B cell (primary cell): ENCODE measurements at regions of chr3 and their contacts with region 1.

Region 1: DNA sequence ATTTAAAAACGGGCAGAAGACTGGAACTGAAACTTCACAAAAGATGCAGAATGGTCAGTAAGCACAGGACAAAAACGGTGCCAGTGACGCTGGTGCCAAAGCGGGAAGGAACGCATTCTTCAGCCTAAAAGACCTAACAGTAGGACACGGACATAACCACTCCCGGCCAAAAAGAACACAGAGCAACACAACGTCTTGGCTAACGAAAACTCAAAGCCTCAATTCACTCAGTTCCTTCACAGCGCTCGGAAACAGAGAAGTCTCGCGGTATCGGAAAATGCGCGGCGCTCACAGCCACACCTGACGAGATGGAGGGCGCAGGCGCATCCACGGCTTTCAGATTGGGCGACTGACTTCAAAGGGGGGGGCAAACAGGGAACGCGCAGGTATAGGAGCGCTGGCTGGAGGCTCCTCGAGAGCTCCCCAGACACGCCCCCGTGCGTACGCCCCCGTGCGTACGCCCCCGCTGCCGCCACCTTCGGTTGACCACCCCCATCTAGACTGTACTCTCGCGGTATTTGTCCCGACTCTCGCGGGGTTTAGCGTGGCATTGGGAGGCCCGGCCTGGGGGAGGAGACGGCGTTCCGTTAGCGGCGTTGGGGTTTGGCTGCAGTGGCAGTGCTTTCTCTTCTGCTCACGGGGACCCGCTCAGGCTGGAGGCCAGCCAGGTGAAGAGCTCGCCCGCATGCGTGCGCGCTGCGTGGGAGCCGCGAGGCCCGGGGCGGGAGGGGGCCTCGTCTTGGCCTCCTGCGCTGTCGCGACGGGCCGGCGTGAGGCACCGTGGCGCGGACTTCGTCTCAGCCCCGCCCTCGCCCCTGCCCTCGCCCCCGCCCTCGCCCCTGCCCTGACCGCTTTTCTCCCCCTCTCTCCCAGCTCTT is at the start of gene NKTR:
- DNase-seq: peak; percentile 100
- ATAC-seq: peak; percentile 93
- H3K4me3 ChIP-seq: peak within 1 kb of the TSS; percentile 80 to 88 (median 86)
- H3K4me3 Mint-ChIP-seq: peak within 1 kb of the TSS; percentile 99
- H3K27ac ChIP-seq: peak within 1 kb of the TSS; percentile 84 to 88
- H3K27ac Mint-ChIP-seq: peak within 1 kb of the TSS; percentile 99
- H3K4me1 ChIP-seq: peaks cover 11 to 19% of the 10 kb centered on the region in 2 donors
- H3K4me1 Mint-ChIP-seq: peaks cover 30% of the 10 kb centered on the region
- H3K27me3 ChIP-seq: no peaks in the 10 kb centered on the region
- H3K27me3 Mint-ChIP-seq: no peaks in the 10 kb centered on the region
- CTCF ChIP-seq: no peak
- total RNA-seq, gene NKTR: 227 and 233 TPM in 2 replicates

Region 2: DNA sequence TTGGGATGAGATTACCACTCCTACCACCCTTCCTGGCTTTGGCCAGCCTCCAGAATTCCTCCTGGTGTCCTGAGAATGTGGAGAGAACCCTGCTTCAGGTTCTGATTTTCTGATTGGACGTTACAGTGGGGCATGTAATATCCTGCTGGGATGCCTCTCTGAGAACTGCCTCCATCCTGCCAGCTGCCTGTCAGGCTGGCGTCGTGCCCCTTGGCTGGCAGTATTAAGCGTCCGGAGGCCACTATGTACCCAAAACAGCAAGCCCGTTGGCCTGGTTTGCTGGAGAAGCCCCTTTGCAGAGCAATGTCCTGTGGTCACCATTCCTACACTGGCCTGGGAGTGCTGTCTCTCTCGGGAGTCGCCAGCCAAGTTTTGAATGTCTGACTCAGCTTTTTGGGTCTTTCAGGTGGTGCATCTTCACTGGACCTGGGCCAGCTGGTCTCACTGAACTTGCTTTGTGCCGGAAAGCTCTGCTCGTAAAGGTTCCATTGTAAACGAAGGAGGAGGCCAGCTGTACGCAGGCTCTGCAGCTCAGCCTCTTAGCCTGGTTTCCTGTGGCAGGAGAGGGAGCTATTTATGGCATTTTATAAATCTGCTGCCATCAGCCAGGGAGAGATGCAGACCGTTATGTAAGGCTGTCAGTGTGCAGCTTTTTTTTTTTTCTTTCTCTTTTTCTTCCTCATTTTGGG is 528.3 kb before region 1 on chr3:
- CTCF ChIA-PET with region 1: no interaction called
- POLR2A ChIA-PET with region 1: no interaction called
- intact Hi-C with region 1: loop called (anchors 5 kb)
- DNase-seq: peak; percentile 55
- ATAC-seq: peak; percentile 14
- H3K4me3 ChIP-seq: peak overlapping the region in 4 of 5 experiments; percentile 12 to 36 (median 30)
- H3K4me3 Mint-ChIP-seq: peak overlapping the region; percentile 78
- H3K27ac ChIP-seq: peak overlapping the region; percentile 51 to 80
- H3K27ac Mint-ChIP-seq: peak overlapping the region; percentile 82
- H3K4me1 ChIP-seq: peaks cover 66 to 79% of the 10 kb centered on the region in 2 donors
- H3K4me1 Mint-ChIP-seq: peaks cover 82% of the 10 kb centered on the region
- H3K27me3 ChIP-seq: no peaks in the 10 kb centered on the region
- H3K27me3 Mint-ChIP-seq: no peaks in the 10 kb centered on the region
- CTCF ChIP-seq: no peak

Region 3: DNA sequence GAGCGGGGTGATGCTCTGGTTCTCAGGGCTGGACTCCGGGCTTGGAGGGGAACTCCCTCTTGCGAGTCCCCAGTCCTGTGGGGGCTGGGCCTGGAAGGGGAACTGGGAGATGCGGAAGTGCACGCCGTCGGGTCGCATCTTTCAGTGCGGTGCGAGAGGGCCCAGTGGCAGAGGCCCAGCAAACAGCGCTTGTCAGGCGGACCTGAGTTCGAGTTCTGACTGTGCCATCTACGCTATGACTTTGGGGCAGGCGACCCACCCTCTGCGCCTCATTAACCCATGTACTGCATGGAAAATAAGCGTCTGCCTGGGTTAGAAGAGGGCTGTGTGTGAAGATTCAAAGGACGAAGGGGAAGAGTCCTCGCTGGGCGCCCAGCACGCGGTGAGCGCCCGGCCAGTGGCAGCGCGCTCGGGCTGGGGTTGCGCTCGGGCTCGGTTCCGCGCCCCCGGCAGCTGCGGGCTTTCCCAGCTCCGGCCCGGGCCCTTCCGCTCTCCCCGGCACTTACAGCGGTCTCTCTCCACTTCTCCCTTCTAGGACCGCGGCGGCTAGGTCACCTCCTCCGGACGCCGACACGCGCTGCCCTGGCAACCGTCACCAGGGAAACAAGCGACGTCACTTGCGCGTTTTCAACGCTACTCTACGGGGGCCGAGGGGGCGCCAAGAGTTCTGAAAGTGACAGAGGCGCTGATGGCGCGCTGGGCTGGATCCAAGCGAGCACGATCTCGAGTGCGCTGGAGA is 172.5 kb after region 1 on chr3 and contains the start of gene CCDC13:
- CTCF ChIA-PET with region 1: interaction called, 4 read pairs
- POLR2A ChIA-PET with region 1: no interaction called
- intact Hi-C with region 1: loop called (anchors 1 kb)
- DNase-seq: peak; percentile 98
- ATAC-seq: peak; percentile 88
- H3K4me3 ChIP-seq: peak within 1 kb of the TSS; percentile 46 to 87 (median 62)
- H3K4me3 Mint-ChIP-seq: peak within 1 kb of the TSS; percentile 90
- H3K27ac ChIP-seq: peak within 1 kb of the TSS; percentile 66 to 81
- H3K27ac Mint-ChIP-seq: peak within 1 kb of the TSS; percentile 92
- H3K4me1 ChIP-seq: peaks cover 4 to 10% of the 10 kb centered on the region in 2 donors
- H3K4me1 Mint-ChIP-seq: peaks cover 11% of the 10 kb centered on the region
- H3K27me3 ChIP-seq: no peaks in the 10 kb centered on the region
- H3K27me3 Mint-ChIP-seq: no peaks in the 10 kb centered on the region
- CTCF ChIP-seq: no peak
- total RNA-seq, gene CCDC13: 1.9 and 2.5 TPM in 2 replicates